ENCODE measurements at regions of chrX and their contacts with region 1.

Region 1: GRCh38 chrX:22329783-22330182 is 57.1 kb downstream of the CBLL2 start:
- DNase-seq: no peak
- H3K4me3 ChIP-seq: no peak overlapping the region
- H3K27ac ChIP-seq: no peak overlapping the region
- H3K4me1 ChIP-seq: no peaks in the 10 kb centered on the region
- H3K27me3 ChIP-seq: peaks cover 0 to 7% of the 10 kb centered on the region in 2 donors
- CTCF ChIP-seq: no peak
- POLR2A ChIP-seq: no peak

Region 2: GRCh38 chrX:21839334-21840192 is 490.2 kb before region 1 on chrX and contains the start of gene MBTPS2:
- intact Hi-C with region 1: no loop called
- DNase-seq: peak; percentile 72 to 79
- H3K4me3 ChIP-seq: peak within 1 kb of the TSS; percentile 61 to 81 (median 67)
- H3K27ac ChIP-seq: peak within 1 kb of the TSS; percentile 74 to 87
- H3K4me1 ChIP-seq: no peaks in the 10 kb centered on the region
- H3K27me3 ChIP-seq: peaks cover 0 to 17% of the 10 kb centered on the region in 2 donors
- CTCF ChIP-seq: peak in 1 of 3 donors; percentile 9
- POLR2A ChIP-seq: no peak
- total RNA-seq, gene MBTPS2: 8.8 to 13.8 (median 9.9) TPM

Region 3: DNA sequence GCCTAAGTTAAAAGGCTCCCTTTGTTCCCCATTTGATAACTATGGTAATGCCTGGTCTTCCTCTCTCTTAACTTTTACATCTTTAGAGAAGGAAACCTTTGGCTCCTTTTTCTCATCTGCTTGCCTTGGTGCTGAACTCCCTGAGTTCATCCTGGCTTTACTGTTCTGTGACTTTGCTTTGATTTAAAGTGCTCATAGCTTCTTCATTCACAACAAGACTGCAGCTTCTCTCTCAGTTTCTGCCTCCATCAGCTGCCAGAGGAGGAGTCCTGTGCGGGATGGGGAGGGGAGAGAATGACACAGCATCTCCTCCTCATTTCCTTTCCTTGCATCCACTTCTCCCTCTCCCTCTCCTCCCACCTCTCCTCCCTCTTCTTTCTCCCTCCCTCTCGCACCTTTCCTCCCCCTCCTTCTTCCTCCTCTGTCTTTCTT is 15.1 kb before region 1 on chrX:
- intact Hi-C with region 1: no loop called
- DNase-seq: no peak
- H3K4me3 ChIP-seq: no peak overlapping the region
- H3K27ac ChIP-seq: no peak overlapping the region
- H3K4me1 ChIP-seq: no peaks in the 10 kb centered on the region
- H3K27me3 ChIP-seq: peaks cover 0 to 15% of the 10 kb centered on the region in 2 donors
- CTCF ChIP-seq: no peak
- POLR2A ChIP-seq: no peak

Region 4: GRCh38 chrX:22345884-22346283 is 16.1 kb after region 1 on chrX:
- intact Hi-C with region 1: no loop called
- DNase-seq: no peak
- H3K4me3 ChIP-seq: no peak overlapping the region
- H3K27ac ChIP-seq: no peak overlapping the region
- H3K4me1 ChIP-seq: no peaks in the 10 kb centered on the region
- H3K27me3 ChIP-seq: peaks cover 0 to 13% of the 10 kb centered on the region in 2 donors
- CTCF ChIP-seq: no peak
- POLR2A ChIP-seq: no peak

Region 5: DNA sequence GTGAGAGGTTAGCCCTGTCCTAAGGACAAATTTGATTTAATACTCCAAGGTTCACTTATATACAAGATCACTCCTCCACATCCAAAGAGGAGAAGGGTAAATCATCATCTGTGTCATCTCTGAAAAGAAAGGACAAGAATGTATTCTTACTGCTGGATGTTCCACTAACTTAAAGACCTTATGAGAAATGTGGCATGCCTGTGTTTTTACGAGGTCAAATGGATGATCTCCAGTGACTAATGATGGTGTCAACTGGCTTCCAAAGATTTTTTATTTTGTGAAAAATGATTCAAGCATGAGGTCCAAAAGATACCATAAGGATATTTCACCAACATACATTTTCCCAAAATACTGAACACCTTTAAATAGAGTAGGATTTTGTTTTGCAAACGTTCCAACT is 1148.3 kb after region 1 on chrX:
- intact Hi-C with region 1: loop called (anchors 5 kb)
- DNase-seq: no peak
- H3K4me3 ChIP-seq: no peak overlapping the region
- H3K27ac ChIP-seq: no peak overlapping the region
- H3K4me1 ChIP-seq: no peaks in the 10 kb centered on the region
- H3K27me3 ChIP-seq: peaks cover 0 to 3% of the 10 kb centered on the region in 2 donors
- CTCF ChIP-seq: no peak
- POLR2A ChIP-seq: no peak